ENCODE measurements at regions of chr4 and their contacts with region 1.

Region 1: DNA sequence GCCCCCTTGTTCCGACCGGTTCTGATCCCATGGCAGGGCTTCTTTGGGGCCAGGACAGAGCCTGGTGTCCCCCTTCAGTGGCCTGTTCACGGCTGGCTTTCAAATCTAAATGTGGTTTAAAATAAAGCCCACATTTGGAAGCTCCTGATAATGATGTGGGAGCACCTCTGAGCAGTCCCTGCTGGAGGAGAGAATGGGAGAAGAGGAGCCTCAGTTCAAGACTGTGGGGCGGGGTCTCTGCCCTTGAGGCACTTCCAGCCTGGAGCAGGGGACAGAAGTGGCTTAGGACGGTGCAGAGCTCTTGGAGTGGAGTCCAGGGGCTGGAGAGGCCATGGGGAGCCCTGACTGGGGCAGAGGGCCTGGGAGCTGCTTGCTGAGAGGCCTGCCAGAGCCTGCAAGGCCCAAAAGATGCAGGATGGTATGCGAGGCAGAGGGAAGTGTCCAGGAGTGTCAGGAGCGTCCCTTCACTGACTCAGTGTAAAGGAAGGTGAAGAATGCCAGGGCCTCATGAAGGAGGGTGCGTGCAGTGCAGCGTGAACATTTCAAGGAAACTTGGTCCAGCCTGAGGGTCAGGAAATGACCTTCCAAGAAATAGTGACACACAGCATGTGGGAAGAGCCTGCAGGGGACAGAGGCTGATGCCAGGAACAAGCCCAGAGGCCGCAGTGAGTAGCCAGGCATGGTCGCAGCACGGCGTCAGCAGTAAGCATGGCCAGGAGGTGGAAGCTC is 21.1 kb upstream of the TADA2B start:
- DNase-seq: peak; percentile 85 to 98
- H3K4me3 ChIP-seq: no peak overlapping the region
- H3K27ac ChIP-seq: peak overlapping the region; percentile 86
- H3K4me1 ChIP-seq: peaks cover 23% of the 10 kb centered on the region
- H3K27me3 ChIP-seq: no peaks in the 10 kb centered on the region
- CTCF ChIP-seq: no peak

Region 2: DNA sequence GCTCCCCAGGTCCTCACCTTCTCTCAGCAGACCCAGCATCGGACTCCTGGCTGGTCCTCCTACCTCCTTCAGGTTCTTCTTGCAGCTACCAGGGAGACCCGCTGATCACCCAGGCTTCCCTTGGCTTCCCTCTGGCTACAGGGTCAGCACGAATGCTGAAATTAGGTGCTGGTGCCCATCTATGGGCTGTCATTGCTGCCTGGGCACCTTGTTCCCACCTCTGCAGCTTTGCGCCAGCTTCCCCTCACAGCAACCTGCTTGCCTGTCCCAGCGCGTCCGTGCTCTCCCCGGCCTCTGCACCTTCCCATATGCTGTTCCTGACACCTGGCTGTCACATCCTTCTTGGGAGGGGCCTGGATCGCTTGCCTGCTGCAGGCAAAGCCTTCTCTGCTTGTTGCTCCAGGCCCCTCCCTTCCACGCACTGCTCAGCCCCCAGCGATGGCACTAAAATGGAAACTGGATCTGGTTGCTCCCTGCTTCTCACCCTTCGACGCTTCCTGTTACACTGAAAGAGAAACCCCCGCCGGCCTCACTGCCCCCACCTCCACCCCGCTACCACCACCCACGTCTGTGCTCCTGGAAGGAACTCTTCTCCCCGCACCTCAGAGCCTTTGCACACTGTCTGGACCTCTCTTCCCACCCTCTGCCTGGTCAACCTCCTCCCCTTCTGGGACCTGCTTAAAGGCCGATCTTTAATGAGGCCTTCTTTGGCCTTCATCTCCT is 1026.0 kb before region 1 on chr4:
- CTCF ChIA-PET with region 1: no interaction called
- POLR2A ChIA-PET with region 1: no interaction called
- intact Hi-C with region 1: no loop called
- DNase-seq: no peak
- H3K4me3 ChIP-seq: no peak overlapping the region
- H3K27ac ChIP-seq: no peak overlapping the region
- H3K4me1 ChIP-seq: no peaks in the 10 kb centered on the region
- H3K27me3 ChIP-seq: peaks cover 49% of the 10 kb centered on the region
- CTCF ChIP-seq: no peak

Region 3: GRCh38 chr4:6493658-6494304 is 528.3 kb before region 1 on chr4:
- CTCF ChIA-PET with region 1: no interaction called
- POLR2A ChIA-PET with region 1: no interaction called
- intact Hi-C with region 1: no loop called
- DNase-seq: no peak
- H3K4me3 ChIP-seq: no peak overlapping the region
- H3K27ac ChIP-seq: no peak overlapping the region
- H3K4me1 ChIP-seq: no peaks in the 10 kb centered on the region
- H3K27me3 ChIP-seq: no peaks in the 10 kb centered on the region
- CTCF ChIP-seq: no peak

Region 4: GRCh38 chr4:6999172-7000055 is 22.7 kb before region 1 on chr4:
- CTCF ChIA-PET with region 1: no interaction called
- POLR2A ChIA-PET with region 1: no interaction called
- intact Hi-C with region 1: loop called (anchors 1 kb)
- DNase-seq: peak; percentile 79 to 93
- H3K4me3 ChIP-seq: no peak overlapping the region
- H3K27ac ChIP-seq: peak overlapping the region; percentile 86
- H3K4me1 ChIP-seq: peaks cover 26% of the 10 kb centered on the region
- H3K27me3 ChIP-seq: no peaks in the 10 kb centered on the region
- CTCF ChIP-seq: no peak

Region 5: GRCh38 chr4:7034262-7035091 is 12.4 kb after region 1 on chr4:
- CTCF ChIA-PET with region 1: no interaction called
- POLR2A ChIA-PET with region 1: no interaction called
- intact Hi-C with region 1: loop called (anchors 1 kb)
- DNase-seq: peak; percentile 73 to 82
- H3K4me3 ChIP-seq: no peak overlapping the region
- H3K27ac ChIP-seq: peak overlapping the region; percentile 43
- H3K4me1 ChIP-seq: peaks cover 18% of the 10 kb centered on the region
- H3K27me3 ChIP-seq: no peaks in the 10 kb centered on the region
- CTCF ChIP-seq: no peak

Region 6: GRCh38 chr4:7042697-7043464 is 20.8 kb after region 1 on chr4 and contains the start of gene TADA2B:
- CTCF ChIA-PET with region 1: interaction called, 11 read pairs
- POLR2A ChIA-PET with region 1: no interaction called
- intact Hi-C with region 1: no loop called
- DNase-seq: peak; percentile 87 to 98
- H3K4me3 ChIP-seq: peak within 1 kb of the TSS; percentile 86
- H3K27ac ChIP-seq: no peak within 1 kb of the TSS
- H3K4me1 ChIP-seq: 0 out of 2 replicates have a peak, but pooled peaks cover 16% of the 10 kb centered on the region
- H3K27me3 ChIP-seq: no peaks in the 10 kb centered on the region
- CTCF ChIP-seq: no peak
- total RNA-seq, gene TADA2B: 9.5 and 9.6 TPM in 2 replicates

Region 7: GRCh38 chr4:7052923-7053715 is 31.0 kb after region 1 on chr4:
- CTCF ChIA-PET with region 1: interaction called, 14 read pairs
- POLR2A ChIA-PET with region 1: no interaction called
- intact Hi-C with region 1: no loop called
- DNase-seq: no peak
- H3K4me3 ChIP-seq: no peak overlapping the region
- H3K27ac ChIP-seq: no peak overlapping the region
- H3K4me1 ChIP-seq: no peaks in the 10 kb centered on the region
- H3K27me3 ChIP-seq: no peaks in the 10 kb centered on the region
- CTCF ChIP-seq: no peak

Measured in PC-9 (cell line).